AG04450 (cell line): ENCODE measurements at regions of chr22 and their contacts with region 1.

Region 1: GRCh38 chr22:30005213-30005857 is 74.9 kb upstream of the HORMAD2 start:
- DNase-seq: no peak
- H3K4me3 ChIP-seq: no peak overlapping the region
- H3K27ac ChIP-seq: no peak overlapping the region
- H3K27me3 ChIP-seq: no peaks in the 10 kb centered on the region
- CTCF ChIP-seq: peak; percentile 100

Region 2: DNA sequence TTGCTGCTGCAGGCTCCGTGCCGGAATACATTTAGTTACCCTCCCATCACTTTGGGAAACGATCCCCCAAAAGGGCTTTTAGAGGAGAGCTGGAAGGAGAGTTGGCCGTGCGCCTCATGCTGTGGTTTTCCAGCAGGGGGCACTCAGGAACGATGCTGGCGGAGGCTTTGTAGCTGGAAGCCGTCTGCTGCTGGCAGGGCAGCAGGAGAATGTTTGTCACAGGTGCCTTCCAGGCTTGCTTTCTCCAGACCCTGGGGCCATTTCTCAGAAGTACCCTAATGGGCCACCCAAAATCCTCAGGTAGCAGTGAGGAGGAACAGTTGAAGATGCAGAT is 315.5 kb before region 1 on chr22:
- CTCF ChIA-PET with region 1: interaction called, 29 read pairs
- POLR2A ChIA-PET with region 1: no interaction called
- DNase-seq: peak; percentile 16
- H3K4me3 ChIP-seq: no peak overlapping the region
- H3K27ac ChIP-seq: no peak overlapping the region
- H3K27me3 ChIP-seq: no peaks in the 10 kb centered on the region
- CTCF ChIP-seq: peak; percentile 90

Region 3: DNA sequence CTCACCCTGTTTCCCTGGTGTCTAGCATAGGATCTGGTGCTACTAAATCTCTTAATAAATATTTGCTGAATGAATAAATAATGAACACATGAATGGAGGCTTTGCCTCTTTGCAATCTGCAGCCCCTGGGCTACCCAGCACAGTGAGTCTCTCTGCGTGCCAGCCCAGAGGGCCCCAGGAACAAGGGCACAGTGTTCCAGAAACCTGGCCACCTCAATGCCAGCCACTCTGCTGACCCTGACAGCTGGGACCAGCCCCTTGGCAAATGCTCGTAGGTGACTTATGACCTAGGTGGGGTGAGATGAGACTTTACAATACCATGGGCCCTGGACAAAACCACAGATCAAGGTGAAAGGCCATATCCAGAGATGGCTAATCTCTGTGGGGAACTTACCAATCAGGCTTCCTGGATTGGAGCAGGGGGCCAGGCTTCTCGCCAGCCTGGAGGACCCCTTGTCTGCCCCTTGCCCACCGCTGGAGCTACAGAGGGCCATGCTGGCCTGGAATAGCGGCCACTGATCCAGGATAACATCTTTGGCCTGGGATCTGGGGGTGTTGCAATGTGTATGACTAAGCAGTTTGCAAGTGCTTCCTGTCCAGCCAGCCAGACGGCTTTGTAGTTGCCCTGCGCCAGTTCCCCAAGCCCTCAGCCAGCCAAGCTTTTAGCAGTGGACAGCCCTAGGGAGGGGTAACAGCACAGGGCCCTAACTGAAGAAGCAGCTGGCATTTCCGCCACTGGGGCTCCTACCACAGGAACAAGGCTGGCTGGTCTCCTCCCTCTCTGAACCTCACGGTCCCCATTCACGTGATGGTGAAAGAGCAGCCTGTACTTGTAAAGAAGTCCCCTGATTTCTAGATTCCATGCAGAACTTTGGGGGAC is 206.3 kb before region 1 on chr22:
- CTCF ChIA-PET with region 1: interaction called, 14 read pairs
- POLR2A ChIA-PET with region 1: no interaction called
- DNase-seq: peak; percentile 86
- H3K4me3 ChIP-seq: no peak overlapping the region
- H3K27ac ChIP-seq: peak overlapping the region; percentile 77
- H3K27me3 ChIP-seq: no peaks in the 10 kb centered on the region
- CTCF ChIP-seq: no peak

Region 4: GRCh38 chr22:29820961-29821789 is 184.2 kb before region 1 on chr22:
- CTCF ChIA-PET with region 1: interaction called, 13 read pairs
- POLR2A ChIA-PET with region 1: no interaction called
- DNase-seq: peak; percentile 77
- H3K4me3 ChIP-seq: no peak overlapping the region
- H3K27ac ChIP-seq: peak overlapping the region; percentile 40
- H3K27me3 ChIP-seq: no peaks in the 10 kb centered on the region
- CTCF ChIP-seq: no peak

Region 5: GRCh38 chr22:29979777-29980321 is 25.5 kb before region 1 on chr22:
- CTCF ChIA-PET with region 1: interaction called, 17 read pairs
- POLR2A ChIA-PET with region 1: no interaction called
- DNase-seq: no peak
- H3K4me3 ChIP-seq: no peak overlapping the region
- H3K27ac ChIP-seq: no peak overlapping the region
- H3K27me3 ChIP-seq: no peaks in the 10 kb centered on the region
- CTCF ChIP-seq: no peak

Region 6: GRCh38 chr22:30015846-30016245 is 10.5 kb after region 1 on chr22:
- CTCF ChIA-PET with region 1: interaction called, 29 read pairs
- POLR2A ChIA-PET with region 1: interaction called, 3 read pairs
- DNase-seq: peak; percentile 81
- H3K4me3 ChIP-seq: no peak overlapping the region
- H3K27ac ChIP-seq: peak overlapping the region; percentile 78
- H3K27me3 ChIP-seq: no peaks in the 10 kb centered on the region
- CTCF ChIP-seq: no peak